ENCODE measurements at regions of chr1 and their contacts with region 1.

Region 1: GRCh38 chr1:227621211-227621610 is 57.9 kb downstream of the ZNF678 start:
- DNase-seq: no peak
- H3K4me3 ChIP-seq: no peak overlapping the region
- H3K27ac ChIP-seq: no peak overlapping the region
- H3K4me1 ChIP-seq: no peaks in the 10 kb centered on the region
- H3K27me3 ChIP-seq: no peaks in the 10 kb centered on the region
- CTCF ChIP-seq: no peak

Region 2: DNA sequence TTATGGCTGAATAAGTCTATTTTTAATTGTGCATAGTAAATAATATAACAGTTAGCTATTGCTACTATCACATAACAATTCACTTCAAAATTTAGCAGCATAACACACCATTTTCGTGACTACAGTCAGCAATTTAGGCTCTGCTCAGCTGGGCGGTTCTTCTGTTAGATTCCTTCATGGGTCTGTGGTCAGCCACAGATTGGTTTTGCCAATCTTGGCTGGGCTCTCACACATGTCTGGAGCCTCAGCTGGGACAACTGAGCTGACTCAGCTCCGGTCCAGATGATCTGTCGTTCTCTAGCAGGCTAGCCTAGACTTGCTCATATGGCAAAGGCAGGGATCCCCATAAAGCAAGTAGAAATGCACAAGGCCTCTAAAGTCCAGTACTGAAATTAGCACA is 287.8 kb before region 1 on chr1:
- CTCF ChIA-PET with region 1: no interaction called
- dilution Hi-C with region 1: no loop called
- in situ Hi-C with region 1: no loop called
- intact Hi-C with region 1: no loop called
- DNase-seq: peak; percentile 89
- H3K4me3 ChIP-seq: no peak overlapping the region
- H3K27ac ChIP-seq: no peak overlapping the region
- H3K4me1 ChIP-seq: no peaks in the 10 kb centered on the region
- H3K27me3 ChIP-seq: no peaks in the 10 kb centered on the region
- CTCF ChIP-seq: no peak

Region 3: GRCh38 chr1:227508431-227508830 is 112.8 kb before region 1 on chr1:
- CTCF ChIA-PET with region 1: no interaction called
- dilution Hi-C with region 1: loop called (anchors 5 kb)
- in situ Hi-C with region 1: no loop called
- intact Hi-C with region 1: no loop called
- DNase-seq: no peak
- H3K4me3 ChIP-seq: no peak overlapping the region
- H3K27ac ChIP-seq: no peak overlapping the region
- H3K4me1 ChIP-seq: no peaks in the 10 kb centered on the region
- H3K27me3 ChIP-seq: no peaks in the 10 kb centered on the region
- CTCF ChIP-seq: no peak

Region 4: DNA sequence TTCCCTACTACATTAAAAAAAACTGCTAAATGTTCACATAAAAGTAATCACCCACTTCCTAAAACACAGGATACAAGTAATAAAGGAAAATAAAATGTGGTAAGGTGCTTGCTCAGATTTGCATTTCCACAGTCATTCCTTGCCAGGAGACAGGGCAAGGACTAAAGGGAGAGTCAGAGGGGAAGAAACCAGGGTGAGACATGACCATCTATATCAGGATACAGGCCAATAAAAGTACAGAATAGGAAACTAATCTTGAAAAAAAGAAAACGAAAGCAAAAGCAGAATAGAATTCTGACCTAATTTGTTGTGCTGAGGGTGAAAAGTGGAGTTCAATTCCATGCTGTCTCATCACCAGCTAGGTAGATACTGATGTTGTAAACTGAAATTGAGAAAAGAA is 86.6 kb after region 1 on chr1:
- CTCF ChIA-PET with region 1: no interaction called
- dilution Hi-C with region 1: loop called (anchors 5 kb)
- in situ Hi-C with region 1: no loop called
- intact Hi-C with region 1: no loop called
- DNase-seq: no peak
- H3K4me3 ChIP-seq: no peak overlapping the region
- H3K27ac ChIP-seq: no peak overlapping the region
- H3K4me1 ChIP-seq: no peaks in the 10 kb centered on the region
- H3K27me3 ChIP-seq: no peaks in the 10 kb centered on the region
- CTCF ChIP-seq: no peak